K562 (cell line): ENCODE measurements at regions of chr12 and their contacts with region 1.

Region 1: DNA sequence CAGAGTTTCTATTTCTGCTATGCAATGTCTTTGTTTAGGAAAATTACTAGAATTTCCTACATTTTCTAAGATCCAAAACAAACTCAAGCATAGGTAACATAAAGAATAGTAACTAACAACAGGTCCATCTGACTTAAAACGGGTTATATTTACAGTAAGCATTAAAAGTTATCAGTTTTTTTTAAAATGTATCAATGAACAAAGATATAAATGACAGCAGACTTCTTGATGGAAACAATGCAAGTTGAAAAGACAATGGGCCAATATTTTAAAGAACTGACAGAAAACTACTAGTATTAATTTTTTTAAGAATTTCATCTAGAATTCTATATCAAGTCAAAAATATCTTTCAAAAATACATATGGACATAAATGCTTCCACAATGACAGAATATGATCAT is 367.1 kb upstream of the MGAT4C start:
- DNase-seq: no peak
- ATAC-seq: no peak
- H3K4me3 ChIP-seq: no peak overlapping the region
- H3K27ac ChIP-seq: no peak overlapping the region
- H3K4me1 ChIP-seq: no peaks in the 10 kb centered on the region
- H3K27me3 ChIP-seq: no peaks in the 10 kb centered on the region
- CTCF ChIP-seq: no peak
- EP300 ChIP-seq: no peak
- POLR2A ChIP-seq: no peak
- RAD21 ChIP-seq: no peak

Region 2: DNA sequence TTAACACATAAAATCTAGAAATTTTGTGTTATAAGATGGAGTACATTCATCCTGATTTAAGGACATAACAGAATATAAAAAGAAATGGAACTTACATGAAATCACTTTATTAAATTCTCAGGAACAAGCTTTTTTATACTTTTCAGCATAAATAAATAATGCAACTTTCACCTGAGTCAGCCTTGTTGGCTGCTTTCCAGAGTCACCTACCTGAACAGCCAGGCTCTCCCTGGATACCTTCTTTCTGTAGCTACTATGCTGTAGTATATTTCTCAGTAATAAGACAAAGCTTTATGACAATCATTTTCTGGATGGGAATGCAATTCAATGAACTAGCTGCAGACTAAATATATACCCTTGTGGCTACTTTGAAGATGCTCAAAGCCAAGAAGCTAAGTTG is 637.3 kb before region 1 on chr12:
- CTCF ChIA-PET with region 1: no interaction called
- POLR2A ChIA-PET with region 1: no interaction called
- in situ Hi-C with region 1: no loop called
- intact Hi-C with region 1: no loop called
- DNase-seq: no peak
- ATAC-seq: no peak
- H3K4me3 ChIP-seq: no peak overlapping the region
- H3K27ac ChIP-seq: no peak overlapping the region
- H3K4me1 ChIP-seq: no peaks in the 10 kb centered on the region
- H3K27me3 ChIP-seq: no peaks in the 10 kb centered on the region
- CTCF ChIP-seq: no peak
- EP300 ChIP-seq: no peak
- POLR2A ChIP-seq: no peak
- RAD21 ChIP-seq: no peak

Region 3: DNA sequence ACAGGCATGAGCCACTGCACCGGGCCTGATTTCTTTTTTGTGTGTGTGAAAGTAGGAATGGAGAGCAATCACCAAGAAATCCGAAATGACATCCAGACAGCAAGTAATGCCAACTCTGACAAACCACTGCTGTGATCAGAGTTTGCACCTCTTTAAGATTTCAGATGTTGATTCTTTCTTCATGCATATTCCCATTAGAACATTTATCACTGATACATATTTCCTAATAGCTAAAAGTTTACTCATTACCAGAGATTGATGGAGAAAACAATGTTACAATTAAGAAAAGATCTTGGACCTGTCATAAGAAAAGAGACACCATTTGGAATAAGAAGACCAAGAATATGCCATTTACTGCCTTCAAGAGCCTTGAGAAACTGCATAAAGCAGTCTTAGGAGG is 150.0 kb before region 1 on chr12:
- CTCF ChIA-PET with region 1: no interaction called
- POLR2A ChIA-PET with region 1: no interaction called
- in situ Hi-C with region 1: no loop called
- intact Hi-C with region 1: no loop called
- DNase-seq: no peak
- ATAC-seq: no peak
- H3K4me3 ChIP-seq: no peak overlapping the region
- H3K27ac ChIP-seq: no peak overlapping the region
- H3K4me1 ChIP-seq: no peaks in the 10 kb centered on the region
- H3K27me3 ChIP-seq: no peaks in the 10 kb centered on the region
- CTCF ChIP-seq: no peak
- EP300 ChIP-seq: no peak
- POLR2A ChIP-seq: no peak
- RAD21 ChIP-seq: no peak

Region 4: GRCh38 chr12:86903159-86903558 is 279.9 kb after region 1 on chr12:
- CTCF ChIA-PET with region 1: no interaction called
- POLR2A ChIA-PET with region 1: no interaction called
- in situ Hi-C with region 1: no loop called
- intact Hi-C with region 1: no loop called
- DNase-seq: no peak
- ATAC-seq: no peak
- H3K4me3 ChIP-seq: no peak overlapping the region
- H3K27ac ChIP-seq: no peak overlapping the region
- H3K4me1 ChIP-seq: no peaks in the 10 kb centered on the region
- H3K27me3 ChIP-seq: no peaks in the 10 kb centered on the region
- CTCF ChIP-seq: no peak
- EP300 ChIP-seq: no peak
- POLR2A ChIP-seq: no peak
- RAD21 ChIP-seq: no peak

Region 5: DNA sequence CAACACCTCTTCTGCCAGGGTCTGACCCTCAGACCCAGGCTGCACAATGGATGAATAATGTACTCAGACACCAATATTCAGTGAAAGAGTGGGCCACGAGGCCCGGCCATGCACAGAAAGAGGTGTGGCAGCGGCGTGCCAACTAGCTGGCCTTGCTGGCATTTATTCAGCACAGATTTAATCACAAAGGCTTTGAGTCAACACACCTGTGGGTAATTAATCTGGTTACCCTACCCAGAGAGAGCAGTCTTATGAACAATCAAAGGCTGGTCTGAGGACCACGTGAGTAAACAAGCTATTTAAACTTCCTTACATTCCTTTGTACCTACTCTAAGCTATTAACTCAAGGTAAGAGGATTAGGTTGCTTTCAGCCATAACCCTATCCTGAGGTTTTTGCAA is 1081.1 kb after region 1 on chr12:
- CTCF ChIA-PET with region 1: no interaction called
- POLR2A ChIA-PET with region 1: no interaction called
- in situ Hi-C with region 1: loop called (anchors 10 kb)
- intact Hi-C with region 1: no loop called
- DNase-seq: no peak
- ATAC-seq: no peak
- H3K4me3 ChIP-seq: no peak overlapping the region
- H3K27ac ChIP-seq: no peak overlapping the region
- H3K4me1 ChIP-seq: no peaks in the 10 kb centered on the region
- H3K27me3 ChIP-seq: no peaks in the 10 kb centered on the region
- CTCF ChIP-seq: no peak
- EP300 ChIP-seq: no peak
- POLR2A ChIP-seq: no peak
- RAD21 ChIP-seq: no peak